Motor neuron (in vitro differentiated cells): ENCODE measurements at regions of chr9 and their contacts with region 1.

Region 1: GRCh38 chr9:38088006-38088925 is 19.2 kb upstream of the SHB start:
- ATAC-seq: peak; percentile 58 to 90 (median 68)
- H3K4me3 ChIP-seq: no peak overlapping the region
- H3K27ac ChIP-seq: no peak overlapping the region
- H3K4me1 ChIP-seq: peaks cover 16 to 17% of the 10 kb centered on the region in 2 donors

Region 2: GRCh38 chr9:37528652-37529510 is 559.4 kb before region 1 on chr9:
- in situ Hi-C with region 1: no loop called
- ATAC-seq: no peak
- H3K4me3 ChIP-seq: no peak overlapping the region
- H3K27ac ChIP-seq: no peak overlapping the region
- H3K4me1 ChIP-seq: no peaks in the 10 kb centered on the region

Region 3: GRCh38 chr9:37769306-37769705 is 319.0 kb before region 1 on chr9:
- in situ Hi-C with region 1: no loop called
- ATAC-seq: no peak
- H3K4me3 ChIP-seq: no peak overlapping the region
- H3K27ac ChIP-seq: no peak overlapping the region
- H3K4me1 ChIP-seq: no peaks in the 10 kb centered on the region

Region 4: GRCh38 chr9:38208206-38208901 is 120.1 kb after region 1 on chr9:
- in situ Hi-C with region 1: loop called in 1 of 9 experiments (anchors 25 kb)
- ATAC-seq: peak in 2 of 8 experiments; percentile 37 to 61
- H3K4me3 ChIP-seq: no peak overlapping the region
- H3K27ac ChIP-seq: no peak overlapping the region
- H3K4me1 ChIP-seq: peaks cover 3 to 7% of the 10 kb centered on the region in 2 donors

Region 5: DNA sequence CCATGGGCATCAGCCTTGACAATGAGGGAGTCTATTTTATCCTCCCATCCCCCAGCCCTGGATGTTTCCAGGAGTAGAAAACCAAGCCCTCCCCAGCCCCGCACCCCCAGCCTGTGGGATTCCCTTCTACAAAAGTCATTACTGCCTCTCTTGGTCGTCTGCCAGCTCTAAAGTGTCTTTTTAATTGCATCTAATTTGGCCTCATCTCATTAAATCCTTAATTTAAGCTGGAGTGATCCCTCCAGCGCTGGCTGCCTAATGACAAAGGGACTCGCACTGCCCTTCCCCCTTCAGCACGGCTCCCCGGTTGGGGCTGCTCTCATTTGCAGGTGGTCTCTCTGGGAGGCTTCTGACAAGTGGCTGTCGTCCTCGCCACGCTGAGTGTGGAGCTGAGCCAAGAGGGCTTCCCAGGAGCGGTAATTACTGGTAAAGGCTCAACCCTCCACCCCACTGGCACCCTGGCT is 196.4 kb after region 1 on chr9:
- in situ Hi-C with region 1: loop called in 1 of 9 experiments (anchors 25 kb)
- ATAC-seq: peak in 5 of 8 experiments; percentile 86 to 92 (median 89)
- H3K4me3 ChIP-seq: no peak overlapping the region
- H3K27ac ChIP-seq: peak overlapping the region in 1 of 2 donors; percentile 30
- H3K4me1 ChIP-seq: peaks cover 14 to 43% of the 10 kb centered on the region in 2 donors

Region 6: GRCh38 chr9:38392235-38393127 is 304.2 kb after region 1 on chr9 and contains the start of gene ALDH1B1:
- in situ Hi-C with region 1: loop called in 1 of 9 experiments (anchors 25 kb)
- ATAC-seq: peak; percentile 96 to 99 (median 99)
- H3K4me3 ChIP-seq: peak within 1 kb of the TSS; percentile 56 to 67 (median 64)
- H3K27ac ChIP-seq: peak within 1 kb of the TSS in 1 of 2 donors; percentile 23
- H3K4me1 ChIP-seq: peaks cover 9 to 15% of the 10 kb centered on the region in 2 donors
- total RNA-seq, gene ALDH1B1: 17.3 to 32.9 (median 22.4) TPM